ENCODE measurements at regions of chr18 and their contacts with region 1.

Region 1: DNA sequence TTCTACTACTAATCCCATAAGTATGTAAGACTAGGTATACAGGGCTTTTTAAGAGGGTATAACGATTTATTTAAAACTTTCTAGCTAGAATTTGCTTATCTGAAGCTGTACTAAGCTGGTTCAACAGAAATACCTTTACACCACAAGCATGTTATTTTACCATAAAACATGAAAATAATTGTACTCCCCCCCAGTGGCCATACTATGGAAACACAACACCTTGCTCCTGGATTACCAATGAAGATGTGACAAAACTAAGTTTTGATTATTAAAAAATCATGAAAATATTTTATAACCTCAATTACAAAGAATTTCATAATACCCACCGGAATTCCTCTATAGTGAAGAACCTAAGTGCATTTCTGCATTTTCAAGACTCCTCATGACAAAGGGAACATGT is 27.3 kb downstream of the LPIN2 start:
- DNase-seq: no peak
- H3K4me3 Mint-ChIP-seq: no peak overlapping the region
- H3K27ac Mint-ChIP-seq: peak overlapping the region; percentile 20
- H3K4me1 Mint-ChIP-seq: peaks cover 72% of the 10 kb centered on the region
- H3K27me3 Mint-ChIP-seq: no peaks in the 10 kb centered on the region

Region 2: GRCh38 chr18:2655178-2655953 is 330.3 kb before region 1 on chr18 and contains the start of gene SMCHD1:
- intact Hi-C with region 1: no loop called
- DNase-seq: peak; percentile 86
- H3K4me3 Mint-ChIP-seq: peak within 1 kb of the TSS; percentile 98
- H3K27ac Mint-ChIP-seq: peak within 1 kb of the TSS; percentile 95
- H3K4me1 Mint-ChIP-seq: peaks cover 33% of the 10 kb centered on the region
- H3K27me3 Mint-ChIP-seq: peaks cover 5% of the 10 kb centered on the region
- total RNA-seq, gene SMCHD1: 100 and 101 TPM in 2 replicates

Region 3: DNA sequence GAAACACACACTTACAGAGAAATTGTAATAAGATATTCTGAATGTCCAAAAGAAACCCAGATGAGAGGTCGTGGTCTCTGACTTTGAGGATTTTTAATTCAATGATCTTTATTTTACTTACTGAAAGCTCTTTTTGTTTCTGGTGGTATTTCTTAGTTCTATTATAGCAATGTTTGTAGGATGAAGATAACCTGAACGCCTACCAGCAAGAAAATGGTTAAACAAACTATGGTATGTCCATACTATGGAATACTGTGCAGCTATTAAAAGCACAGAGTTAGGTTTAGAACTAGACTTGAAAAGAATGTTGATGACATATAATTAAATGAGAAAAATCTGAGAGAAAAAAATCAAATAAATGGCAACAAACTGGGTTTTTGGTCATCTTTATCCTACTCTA is 33.0 kb before region 1 on chr18:
- intact Hi-C with region 1: no loop called
- DNase-seq: no peak
- H3K4me3 Mint-ChIP-seq: no peak overlapping the region
- H3K27ac Mint-ChIP-seq: no peak overlapping the region
- H3K4me1 Mint-ChIP-seq: peaks cover 62% of the 10 kb centered on the region
- H3K27me3 Mint-ChIP-seq: no peaks in the 10 kb centered on the region

Region 4: DNA sequence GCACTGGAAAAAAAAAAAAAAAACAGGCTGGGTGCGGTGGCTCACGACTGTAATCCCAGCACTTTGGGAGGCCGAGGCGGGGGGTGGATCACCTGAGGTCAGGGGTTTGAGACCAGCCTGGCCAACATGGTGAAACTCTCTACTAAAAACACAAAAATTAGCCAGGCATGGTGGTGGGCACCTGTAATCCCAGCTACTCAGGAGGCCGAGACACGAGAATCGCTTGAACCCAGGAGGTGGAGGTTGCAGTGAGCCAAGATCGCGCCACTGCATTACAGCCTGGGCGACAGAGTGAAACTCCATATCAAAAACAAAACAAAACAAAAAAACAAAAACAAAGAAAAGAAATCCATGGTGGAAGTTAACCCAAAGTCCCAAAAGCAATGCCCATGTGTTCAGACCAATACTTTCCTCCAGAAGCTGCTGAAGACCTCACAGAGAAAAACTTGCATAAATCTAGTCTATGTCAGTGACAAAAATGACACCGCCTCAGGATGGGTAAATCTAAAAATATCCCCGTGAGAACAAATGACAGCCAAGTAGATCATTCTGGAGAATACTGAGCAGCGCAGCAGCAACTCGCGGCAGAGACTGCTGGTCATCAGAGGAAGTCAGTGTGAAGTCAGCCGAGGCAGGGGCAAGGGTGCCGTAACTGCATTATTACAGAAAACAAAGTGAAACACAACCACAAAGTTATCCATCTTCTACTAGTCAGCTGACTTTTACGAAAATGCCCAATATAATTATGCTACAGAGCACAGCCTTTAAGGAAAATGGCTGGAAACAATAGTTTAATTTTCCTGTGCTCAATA is 13.7 kb before region 1 on chr18:
- intact Hi-C with region 1: loop called (anchors 1 kb)
- DNase-seq: peak; percentile 67
- H3K4me3 Mint-ChIP-seq: peak overlapping the region; percentile 89
- H3K27ac Mint-ChIP-seq: peak overlapping the region; percentile 98
- H3K4me1 Mint-ChIP-seq: peaks cover 81% of the 10 kb centered on the region
- H3K27me3 Mint-ChIP-seq: no peaks in the 10 kb centered on the region

Region 5: GRCh38 chr18:3093624-3094337 is 108.2 kb after region 1 on chr18:
- intact Hi-C with region 1: no loop called
- DNase-seq: no peak
- H3K4me3 Mint-ChIP-seq: no peak overlapping the region
- H3K27ac Mint-ChIP-seq: no peak overlapping the region
- H3K4me1 Mint-ChIP-seq: peaks cover 20% of the 10 kb centered on the region
- H3K27me3 Mint-ChIP-seq: no peaks in the 10 kb centered on the region